ENCODE measurements at regions of chr11 and their contacts with region 1.

Region 1: DNA sequence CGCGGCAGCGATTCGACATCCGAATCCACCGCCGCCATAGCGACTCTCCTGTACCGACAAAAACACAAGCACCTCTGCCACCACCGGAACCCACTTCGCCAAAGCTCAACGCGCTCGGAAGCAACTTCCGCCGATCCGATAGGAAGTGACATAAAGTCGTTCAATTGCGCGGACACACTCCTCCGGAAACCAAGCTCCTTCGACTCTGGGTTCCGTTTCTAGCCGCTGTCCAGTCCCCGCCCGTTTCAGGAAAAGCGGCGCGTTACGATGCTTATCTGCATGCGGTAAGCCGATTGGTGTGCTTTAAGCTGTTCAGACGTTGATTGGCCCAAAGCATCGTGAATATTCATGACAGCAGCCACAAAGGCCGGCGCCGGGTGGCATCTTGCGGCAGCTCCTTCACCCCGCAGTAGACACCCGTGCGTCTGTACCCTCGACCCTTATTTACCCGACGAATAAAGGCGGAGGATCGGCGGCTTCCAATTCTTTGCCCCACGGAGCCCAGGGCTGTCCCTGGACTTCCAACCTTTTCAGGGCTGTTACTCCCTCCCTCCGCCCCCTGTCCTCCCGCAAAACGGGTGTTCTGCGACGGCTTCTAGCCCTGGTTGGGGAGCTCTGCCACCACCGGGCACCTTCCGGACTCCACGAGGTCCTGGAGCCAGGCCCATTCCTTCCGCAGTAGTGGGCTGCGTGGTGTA is at the start of gene TUT1:
- DNase-seq: peak; percentile 98
- ATAC-seq: peak; percentile 86
- H3K4me3 ChIP-seq: peak within 1 kb of the TSS; percentile 81 to 89 (median 82)
- H3K27ac ChIP-seq: peak within 1 kb of the TSS; percentile 85
- H3K4me1 ChIP-seq: peaks cover 51% of the 10 kb centered on the region
- H3K27me3 ChIP-seq: no peaks in the 10 kb centered on the region; a peak in 1 of 5 replicates
- CTCF ChIP-seq: no peak; the same call in 1 of the 2 replicates
- EP300 ChIP-seq: peak in 1 of 2 experiments; percentile 60; a peak in 1 of 4 replicates
- POLR2A ChIP-seq: peak; percentile 96 to 97
- RAD21 ChIP-seq: no peak; the same call in 1 of the 2 replicates
- total RNA-seq, gene TUT1: 8.5 and 9.7 TPM in 2 replicates

Region 2: DNA sequence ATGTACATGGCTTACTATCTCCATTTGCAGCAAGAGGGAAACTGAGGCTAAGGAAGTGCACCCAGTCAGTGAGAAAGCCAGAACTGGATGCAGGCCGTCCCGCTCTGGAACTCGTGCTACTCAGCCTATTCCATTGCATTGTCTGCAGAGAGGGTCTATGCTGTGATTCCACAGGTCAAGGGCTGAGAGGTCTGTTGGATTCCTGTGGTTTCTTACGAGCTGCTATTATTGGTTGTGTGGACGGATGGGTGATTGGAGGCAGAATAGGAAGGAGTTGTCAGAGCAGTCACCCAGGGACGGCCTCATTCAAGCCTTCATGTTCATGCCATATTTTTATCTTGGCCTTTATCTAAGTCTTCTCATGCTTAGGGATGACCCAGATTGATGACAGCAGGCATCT is 139.3 kb before region 1 on chr11:
- CTCF ChIA-PET with region 1: no interaction called
- POLR2A ChIA-PET with region 1: no interaction called
- in situ Hi-C with region 1: no loop called
- intact Hi-C with region 1: no loop called
- DNase-seq: no peak
- ATAC-seq: no peak
- H3K4me3 ChIP-seq: no peak overlapping the region
- H3K27ac ChIP-seq: no peak overlapping the region
- H3K4me1 ChIP-seq: peaks cover 10% of the 10 kb centered on the region
- H3K27me3 ChIP-seq: peaks cover 2 to 7% of the 10 kb centered on the region in 2 experiments; a peak in 3 of 5 replicates
- CTCF ChIP-seq: no peak
- EP300 ChIP-seq: no peak
- POLR2A ChIP-seq: no peak
- RAD21 ChIP-seq: no peak

Region 3: DNA sequence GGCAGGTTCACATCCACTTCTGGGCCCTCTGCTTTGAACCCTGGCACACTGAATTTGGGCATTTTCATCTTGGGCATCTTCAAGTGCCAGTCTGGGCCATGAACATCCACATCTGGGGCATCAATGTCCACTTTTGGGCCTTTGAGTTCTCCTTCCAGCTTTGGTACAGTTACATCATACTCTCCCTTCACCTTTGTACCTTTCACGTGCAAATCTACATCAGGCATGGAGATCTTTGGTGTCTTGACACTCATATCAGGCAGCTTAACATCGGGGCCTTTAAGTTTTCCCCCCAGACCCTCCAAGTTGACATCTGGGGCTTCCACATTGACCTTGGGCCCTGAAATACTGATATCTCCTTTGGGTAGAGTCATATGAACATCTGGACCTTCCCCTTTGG is 59.5 kb before region 1 on chr11:
- CTCF ChIA-PET with region 1: no interaction called
- POLR2A ChIA-PET with region 1: no interaction called
- in situ Hi-C with region 1: no loop called
- intact Hi-C with region 1: no loop called
- DNase-seq: no peak
- ATAC-seq: no peak
- H3K4me3 ChIP-seq: no peak overlapping the region
- H3K27ac ChIP-seq: no peak overlapping the region
- H3K4me1 ChIP-seq: peaks cover 13% of the 10 kb centered on the region
- H3K27me3 ChIP-seq: no peaks in the 10 kb centered on the region
- CTCF ChIP-seq: no peak
- EP300 ChIP-seq: no peak
- POLR2A ChIP-seq: no peak
- RAD21 ChIP-seq: no peak

Region 4: DNA sequence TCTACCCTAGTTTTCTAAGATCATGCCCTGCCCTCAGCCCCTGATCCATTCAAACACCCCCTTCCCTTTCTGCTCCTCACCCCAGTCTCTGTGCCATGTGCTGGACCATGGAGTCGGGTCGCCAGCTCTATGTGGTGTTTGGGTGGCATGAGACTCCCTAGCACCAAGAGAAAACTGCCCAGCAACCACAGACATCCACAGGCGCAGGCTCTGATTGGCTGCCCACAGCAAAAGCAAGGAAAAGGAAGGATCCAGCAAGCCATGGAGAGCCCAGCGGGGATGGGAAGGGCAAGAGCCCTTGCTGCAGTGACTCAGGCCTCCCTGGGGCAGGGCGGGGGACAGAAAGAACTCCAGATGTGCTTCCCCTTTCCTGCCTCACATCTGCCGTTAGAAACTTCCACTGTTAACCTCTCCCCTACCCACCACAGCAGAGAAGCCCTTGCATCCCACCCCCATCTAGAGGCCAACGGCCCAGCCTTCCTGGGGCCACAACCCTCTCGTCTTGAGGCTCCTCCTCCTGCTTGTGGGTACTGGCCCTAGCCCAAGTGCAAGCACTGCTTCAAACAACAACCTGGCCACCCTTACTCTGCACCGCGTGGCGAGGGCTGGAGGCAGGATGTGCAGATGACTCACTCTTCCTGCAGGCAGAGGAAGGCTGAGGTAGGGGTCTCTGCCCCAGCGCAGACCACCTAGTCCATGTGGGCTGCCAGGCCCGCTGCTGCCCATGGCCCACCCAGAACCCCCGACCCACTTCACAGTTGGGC is 35.3 kb before region 1 on chr11:
- CTCF ChIA-PET with region 1: interaction called, 3 read pairs
- POLR2A ChIA-PET with region 1: interaction called, 23 read pairs
- in situ Hi-C with region 1: no loop called
- intact Hi-C with region 1: no loop called
- DNase-seq: no peak
- ATAC-seq: peak; percentile 1
- H3K4me3 ChIP-seq: no peak overlapping the region
- H3K27ac ChIP-seq: peak overlapping the region; percentile 44
- H3K4me1 ChIP-seq: peaks cover 85% of the 10 kb centered on the region
- H3K27me3 ChIP-seq: no peaks in the 10 kb centered on the region
- CTCF ChIP-seq: no peak
- EP300 ChIP-seq: no peak
- POLR2A ChIP-seq: no peak
- RAD21 ChIP-seq: no peak

Region 5: GRCh38 chr11:62580959-62581715 is 10.5 kb before region 1 on chr11:
- CTCF ChIA-PET with region 1: no interaction called
- POLR2A ChIA-PET with region 1: interaction called, 160 read pairs
- in situ Hi-C with region 1: no loop called
- intact Hi-C with region 1: no loop called
- DNase-seq: no peak
- ATAC-seq: no peak
- H3K4me3 ChIP-seq: no peak overlapping the region
- H3K27ac ChIP-seq: no peak overlapping the region
- H3K4me1 ChIP-seq: peaks cover 10% of the 10 kb centered on the region
- H3K27me3 ChIP-seq: no peaks in the 10 kb centered on the region
- CTCF ChIP-seq: no peak
- EP300 ChIP-seq: no peak
- POLR2A ChIP-seq: no peak
- RAD21 ChIP-seq: no peak

Region 6: GRCh38 chr11:62645956-62646824 is 54.6 kb after region 1 on chr11 and contains the start of gene GANAB:
- CTCF ChIA-PET with region 1: no interaction called
- POLR2A ChIA-PET with region 1: interaction called, 37 read pairs
- in situ Hi-C with region 1: no loop called
- intact Hi-C with region 1: loop called (anchors 5 kb)
- DNase-seq: peak; percentile 95
- ATAC-seq: peak; percentile 94
- H3K4me3 ChIP-seq: peak within 1 kb of the TSS; percentile 86 to 96 (median 90)
- H3K27ac ChIP-seq: peak within 1 kb of the TSS; percentile 98
- H3K4me1 ChIP-seq: peaks cover 53% of the 10 kb centered on the region
- H3K27me3 ChIP-seq: no peaks in the 10 kb centered on the region
- CTCF ChIP-seq: no peak
- EP300 ChIP-seq: no peak; a peak in 1 of 4 replicates
- POLR2A ChIP-seq: peak; percentile 92 to 95
- RAD21 ChIP-seq: no peak
- total RNA-seq, gene GANAB: 50.8 and 99.5 TPM in 2 replicates

Region 7: DNA sequence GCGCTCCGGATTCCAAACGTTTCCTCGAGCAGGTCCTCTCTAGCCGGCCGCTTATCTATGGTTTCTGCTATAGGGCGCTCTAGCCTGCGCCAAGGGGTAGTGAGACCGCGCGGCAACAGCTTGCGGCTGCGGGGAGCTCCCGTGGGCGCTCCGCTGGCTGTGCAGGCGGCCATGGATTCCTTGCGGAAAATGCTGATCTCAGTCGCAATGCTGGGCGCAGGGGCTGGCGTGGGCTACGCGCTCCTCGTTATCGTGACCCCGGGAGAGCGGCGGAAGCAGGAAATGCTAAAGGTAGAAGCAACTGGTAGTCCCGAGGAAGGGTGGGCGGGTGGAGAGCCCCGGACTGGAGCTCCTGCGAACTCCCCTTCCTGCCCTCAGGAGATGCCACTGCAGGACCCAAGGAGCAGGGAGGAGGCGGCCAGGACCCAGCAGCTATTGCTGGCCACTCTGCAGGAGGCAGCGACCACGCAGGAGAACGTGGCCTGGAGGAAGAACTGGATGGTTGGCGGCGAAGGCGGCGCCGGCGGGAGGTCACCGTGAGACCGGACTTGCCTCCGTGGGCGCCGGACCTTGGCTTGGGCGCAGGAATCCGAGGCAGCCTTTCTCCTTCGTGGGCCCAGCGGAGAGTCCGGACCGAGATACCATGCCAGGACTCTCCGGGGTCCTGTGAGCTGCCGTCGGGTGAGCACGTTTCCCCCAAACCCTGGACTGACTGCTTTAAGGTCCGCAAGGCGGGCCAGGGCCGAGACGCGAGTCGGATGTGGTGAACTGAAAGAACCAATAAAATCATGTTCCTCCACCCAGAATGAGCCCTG is 80.2 kb after region 1 on chr11 and contains the starts of genes LBHD1 and UQCC3:
- CTCF ChIA-PET with region 1: no interaction called
- POLR2A ChIA-PET with region 1: interaction called, 38 read pairs
- in situ Hi-C with region 1: no loop called
- intact Hi-C with region 1: no loop called
- DNase-seq: peak; percentile 79
- ATAC-seq: peak; percentile 83
- H3K4me3 ChIP-seq: peak within 1 kb of the TSS; percentile 76 to 98 (median 91)
- H3K27ac ChIP-seq: peak within 1 kb of the TSS; percentile 90
- H3K4me1 ChIP-seq: peaks cover 59% of the 10 kb centered on the region
- H3K27me3 ChIP-seq: no peaks in the 10 kb centered on the region; a peak in 1 of 5 replicates
- CTCF ChIP-seq: no peak; the same call in none of the 2 replicates
- EP300 ChIP-seq: peak in 1 of 2 experiments; percentile 21; a peak in 1 of 4 replicates
- POLR2A ChIP-seq: peak; percentile 80 to 82
- RAD21 ChIP-seq: no peak
- total RNA-seq, gene LBHD1: 1.4 and 3.7 TPM in 2 replicates
- total RNA-seq, gene UQCC3: 12.1 and 16.0 TPM in 2 replicates

Region 8: GRCh38 chr11:62753736-62754603 is 162.4 kb after region 1 on chr11 and contains the start of gene ZBTB3:
- CTCF ChIA-PET with region 1: no interaction called
- POLR2A ChIA-PET with region 1: interaction called, 20 read pairs
- in situ Hi-C with region 1: no loop called
- intact Hi-C with region 1: no loop called
- DNase-seq: peak; percentile 99
- ATAC-seq: peak; percentile 96
- H3K4me3 ChIP-seq: peak within 1 kb of the TSS; percentile 55 to 86 (median 81)
- H3K27ac ChIP-seq: peak within 1 kb of the TSS; percentile 75
- H3K4me1 ChIP-seq: peaks cover 35% of the 10 kb centered on the region
- H3K27me3 ChIP-seq: no peaks in the 10 kb centered on the region
- CTCF ChIP-seq: peak; percentile 29; the same call in 1 of the 2 replicates
- EP300 ChIP-seq: no peak
- POLR2A ChIP-seq: peak; percentile 83 to 88
- RAD21 ChIP-seq: no peak; the same call in 1 of the 2 replicates
- total RNA-seq, gene ZBTB3: 4.0 and 5.2 TPM in 2 replicates

Measured in HepG2 (cell line).